Activated CD4-positive, alpha-beta T cell treated with anti-CD3 and anti-CD28 coated beads, Interleukin-2, amount 10 ng/mL, durations not matched to agents 7 days and 5 days (primary cell): ENCODE measurements at regions of chr2 and their contacts with region 1.

Region 1: DNA sequence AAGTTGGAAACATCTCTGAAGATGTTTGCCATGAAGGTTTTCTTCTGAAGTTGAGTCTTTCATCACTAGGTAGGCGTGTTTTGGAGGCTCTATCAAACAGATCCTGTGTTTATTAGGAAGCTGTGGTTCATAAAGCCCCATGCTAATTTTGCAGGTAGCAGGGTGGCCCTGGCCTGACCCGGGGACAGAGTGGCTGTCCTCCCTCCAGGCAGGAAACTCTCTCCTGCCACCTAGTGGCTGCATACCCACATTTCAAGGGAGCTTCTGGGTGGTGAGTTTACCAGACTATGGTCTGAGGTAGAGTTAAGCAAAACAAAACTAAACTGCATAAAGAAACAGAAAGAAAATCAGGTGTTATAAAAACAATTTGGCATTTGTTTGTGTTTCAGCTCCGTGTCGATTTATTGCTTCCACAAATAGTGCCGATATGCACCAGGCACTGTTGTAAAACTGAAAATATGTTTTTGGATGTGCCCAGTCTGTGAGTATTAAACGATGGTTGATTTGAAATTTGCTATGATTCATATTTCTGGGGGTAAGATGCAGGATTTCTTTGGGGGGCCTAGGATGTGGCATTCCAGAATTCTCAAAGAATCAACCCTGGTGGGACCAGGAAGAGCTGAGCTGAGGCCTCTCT is 26.0 kb upstream of the IL37 start:
- DNase-seq: peak; percentile 66
- H3K4me3 Mint-ChIP-seq: peak overlapping the region; percentile 6
- H3K27ac Mint-ChIP-seq: no peak overlapping the region
- H3K4me1 Mint-ChIP-seq: peaks cover 27% of the 10 kb centered on the region
- H3K27me3 Mint-ChIP-seq: peaks cover 2% of the 10 kb centered on the region

Region 2: GRCh38 chr2:112902816-112903215 is 17.8 kb after region 1 on chr2:
- CTCF ChIA-PET with region 1: interaction called, 13 read pairs
- POLR2A ChIA-PET with region 1: no interaction called
- DNase-seq: no peak
- H3K4me3 Mint-ChIP-seq: no peak overlapping the region
- H3K27ac Mint-ChIP-seq: no peak overlapping the region
- H3K4me1 Mint-ChIP-seq: no peaks in the 10 kb centered on the region
- H3K27me3 Mint-ChIP-seq: peaks cover 10% of the 10 kb centered on the region

Region 3: GRCh38 chr2:112920923-112921532 is 36.0 kb after region 1 on chr2:
- CTCF ChIA-PET with region 1: interaction called, 12 read pairs
- POLR2A ChIA-PET with region 1: no interaction called
- DNase-seq: no peak
- H3K4me3 Mint-ChIP-seq: no peak overlapping the region
- H3K27ac Mint-ChIP-seq: no peak overlapping the region
- H3K4me1 Mint-ChIP-seq: peaks cover 10% of the 10 kb centered on the region
- H3K27me3 Mint-ChIP-seq: peaks cover 1% of the 10 kb centered on the region